ENCODE measurements at regions of chr4 and their contacts with region 1.

Region 1: DNA sequence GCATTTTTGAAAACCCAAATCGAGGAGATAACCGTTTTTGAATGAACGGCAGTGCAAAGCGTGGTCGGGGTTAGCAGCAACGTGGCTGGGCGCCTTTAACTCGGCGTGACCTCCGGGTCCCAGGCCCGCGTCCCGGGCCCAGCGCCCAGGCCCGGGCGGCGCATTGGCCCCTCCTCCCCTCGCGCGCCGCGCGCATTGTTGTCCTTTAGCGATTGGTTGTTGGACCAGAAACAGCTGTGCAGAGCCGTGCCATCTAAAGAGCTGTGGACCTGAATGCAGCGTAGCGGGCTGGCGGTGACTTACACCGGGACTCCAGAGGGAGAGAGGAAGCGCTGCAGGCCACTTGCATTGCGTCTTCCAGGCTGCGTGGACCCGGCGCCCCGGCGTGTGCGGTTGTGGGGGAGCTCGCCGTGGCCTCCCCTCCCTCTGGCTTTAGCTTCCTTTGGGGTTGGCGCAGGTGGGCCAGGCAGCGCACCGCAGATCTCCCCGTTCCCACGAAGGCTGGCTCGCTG is at the start of gene STOX2:
- DNase-seq: peak; percentile 25 to 81
- H3K4me3 ChIP-seq: peak within 1 kb of the TSS; percentile 58 to 76
- H3K27ac ChIP-seq: peak within 1 kb of the TSS; percentile 48 to 60
- H3K4me1 ChIP-seq: no peaks in the 10 kb centered on the region
- H3K27me3 ChIP-seq: no peaks in the 10 kb centered on the region
- CTCF ChIP-seq: no peak
- total RNA-seq, gene STOX2: 41.7 TPM

Region 2: DNA sequence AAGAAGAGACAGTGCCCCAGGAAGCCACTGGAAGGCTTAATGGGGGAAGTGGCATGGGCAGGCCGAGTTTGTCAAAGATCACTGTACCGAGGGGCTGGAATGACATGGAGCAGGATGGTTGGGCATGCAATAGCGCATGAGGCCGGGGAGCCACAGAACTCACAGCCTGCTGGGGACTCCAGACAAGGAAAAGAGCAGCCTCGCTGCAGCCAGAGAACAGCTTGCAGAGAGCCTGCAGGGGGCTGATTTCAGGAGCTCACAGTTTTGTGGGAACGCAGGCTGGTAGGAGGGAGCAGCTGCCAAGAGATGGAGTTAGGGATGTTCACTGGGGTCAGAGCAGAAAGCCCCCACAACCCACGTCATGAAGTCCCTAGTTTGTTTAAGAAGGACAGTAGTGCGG is 45.4 kb after region 1 on chr4:
- intact Hi-C with region 1: no loop called
- DNase-seq: no peak
- H3K4me3 ChIP-seq: no peak overlapping the region
- H3K27ac ChIP-seq: no peak overlapping the region
- H3K4me1 ChIP-seq: no peaks in the 10 kb centered on the region
- H3K27me3 ChIP-seq: no peaks in the 10 kb centered on the region
- CTCF ChIP-seq: no peak

Region 3: DNA sequence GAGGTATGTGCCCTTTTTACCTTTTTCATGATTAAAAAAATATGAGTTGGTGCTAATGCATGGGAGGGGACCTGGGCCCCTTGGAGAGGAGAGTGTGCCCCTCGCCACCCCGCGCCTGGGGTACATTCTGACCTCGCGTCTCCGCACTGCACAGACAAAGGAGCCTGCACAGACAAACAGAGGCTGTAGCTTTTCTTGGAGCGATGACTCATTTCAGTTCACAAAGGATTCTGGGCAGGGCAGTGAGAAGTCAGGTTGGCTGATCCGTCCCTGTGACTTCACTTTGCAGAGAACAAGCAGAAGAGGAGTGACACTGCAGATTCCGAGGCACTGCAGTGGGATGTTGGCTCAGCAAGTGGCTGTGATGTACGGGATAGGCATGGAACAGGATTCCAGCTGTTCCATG is 82.9 kb after region 1 on chr4:
- intact Hi-C with region 1: loop called (anchors 5 kb)
- DNase-seq: peak; percentile 54 to 87
- H3K4me3 ChIP-seq: peak overlapping the region; percentile 51 to 54
- H3K27ac ChIP-seq: peak overlapping the region; percentile 52 to 77
- H3K4me1 ChIP-seq: peaks cover 0 to 13% of the 10 kb centered on the region in 2 donors
- H3K27me3 ChIP-seq: no peaks in the 10 kb centered on the region
- CTCF ChIP-seq: no peak